Activated CD8-positive, alpha-beta T cell treated with anti-CD3 and anti-CD28 coated beads for 36 hours (primary cell): ENCODE measurements at regions of chr7 and their contacts with region 1.

Region 1: GRCh38 chr7:131231381-131232220 is 96.1 kb upstream of the MKLN1 start:
- DNase-seq: peak; percentile 84
- ATAC-seq: peak; percentile 74
- H3K4me3 Mint-ChIP-seq: peak overlapping the region; percentile 59
- H3K27ac Mint-ChIP-seq: peak overlapping the region; percentile 95
- H3K4me1 Mint-ChIP-seq: peaks cover 46% of the 10 kb centered on the region
- H3K27me3 Mint-ChIP-seq: no peaks in the 10 kb centered on the region
- CTCF ChIP-seq: no peak

Region 2: DNA sequence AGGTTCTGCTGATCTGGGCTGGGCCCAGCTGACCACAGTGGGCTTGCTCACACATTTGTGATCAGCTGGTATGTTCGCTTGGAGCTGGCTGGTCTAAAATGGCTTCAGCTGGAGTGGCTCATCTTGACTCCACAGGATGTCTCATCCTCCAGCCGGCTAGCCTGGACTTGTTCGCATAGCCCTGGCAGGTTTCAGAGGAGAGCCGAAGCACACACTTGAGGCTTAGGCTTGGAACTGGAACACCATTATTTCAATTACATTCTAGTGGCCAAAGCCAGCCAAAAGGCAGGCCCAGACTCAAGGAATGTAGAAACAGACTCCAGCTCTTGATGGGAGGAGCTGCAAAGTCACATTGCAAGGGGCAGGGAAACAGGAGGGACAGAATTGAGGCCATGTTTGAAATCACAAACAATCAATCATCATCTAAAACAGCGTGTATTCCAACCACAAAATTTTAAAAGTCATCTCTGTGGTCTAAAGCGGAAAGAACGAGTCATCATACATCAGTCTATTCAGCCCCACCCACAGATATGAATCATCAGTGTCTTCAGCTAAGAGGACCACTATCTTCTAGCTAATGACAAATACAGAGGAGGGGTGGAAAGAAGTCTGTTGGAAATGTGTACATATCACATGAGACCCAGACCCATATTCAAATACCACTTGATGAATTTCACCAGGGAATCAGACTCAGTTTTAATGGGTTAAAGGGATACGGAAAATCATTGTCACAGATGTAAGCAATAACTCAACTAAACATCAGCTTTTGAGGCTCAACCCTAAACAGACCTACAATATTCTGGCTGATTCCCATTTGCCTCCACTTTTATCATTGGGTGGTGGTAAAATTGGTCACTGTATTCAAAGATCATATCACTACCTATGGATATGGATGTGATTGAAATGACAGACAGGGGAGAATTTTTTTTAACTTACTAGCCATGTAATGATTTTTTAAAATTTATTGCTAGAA is 42.9 kb before region 1 on chr7:
- CTCF ChIA-PET with region 1: interaction called, 4 read pairs
- POLR2A ChIA-PET with region 1: interaction called, 11 read pairs
- intact Hi-C with region 1: loop called (anchors 2 kb)
- DNase-seq: peak; percentile 70
- ATAC-seq: peak; percentile 84
- H3K4me3 Mint-ChIP-seq: peak overlapping the region; percentile 5
- H3K27ac Mint-ChIP-seq: peak overlapping the region; percentile 93
- H3K4me1 Mint-ChIP-seq: peaks cover 60% of the 10 kb centered on the region
- H3K27me3 Mint-ChIP-seq: no peaks in the 10 kb centered on the region
- CTCF ChIP-seq: no peak

Region 3: GRCh38 chr7:131327626-131328376 is 96.2 kb after region 1 on chr7 and contains the start of gene MKLN1:
- CTCF ChIA-PET with region 1: no interaction called
- POLR2A ChIA-PET with region 1: interaction called, 3 read pairs
- intact Hi-C with region 1: loop called (anchors 5 kb)
- DNase-seq: peak; percentile 95
- ATAC-seq: peak; percentile 96
- H3K4me3 Mint-ChIP-seq: peak within 1 kb of the TSS; percentile 99
- H3K27ac Mint-ChIP-seq: peak within 1 kb of the TSS; percentile 95
- H3K4me1 Mint-ChIP-seq: peaks cover 47% of the 10 kb centered on the region
- H3K27me3 Mint-ChIP-seq: no peaks in the 10 kb centered on the region
- CTCF ChIP-seq: no peak
- total RNA-seq, gene MKLN1: 38.5 TPM